ENCODE measurements at regions of chr10 and their contacts with region 1.

Region 1: GRCh38 chr10:104638861-104639589 is 2.1 kb upstream of the SORCS3 start:
- DNase-seq: peak; percentile 79

Region 2: DNA sequence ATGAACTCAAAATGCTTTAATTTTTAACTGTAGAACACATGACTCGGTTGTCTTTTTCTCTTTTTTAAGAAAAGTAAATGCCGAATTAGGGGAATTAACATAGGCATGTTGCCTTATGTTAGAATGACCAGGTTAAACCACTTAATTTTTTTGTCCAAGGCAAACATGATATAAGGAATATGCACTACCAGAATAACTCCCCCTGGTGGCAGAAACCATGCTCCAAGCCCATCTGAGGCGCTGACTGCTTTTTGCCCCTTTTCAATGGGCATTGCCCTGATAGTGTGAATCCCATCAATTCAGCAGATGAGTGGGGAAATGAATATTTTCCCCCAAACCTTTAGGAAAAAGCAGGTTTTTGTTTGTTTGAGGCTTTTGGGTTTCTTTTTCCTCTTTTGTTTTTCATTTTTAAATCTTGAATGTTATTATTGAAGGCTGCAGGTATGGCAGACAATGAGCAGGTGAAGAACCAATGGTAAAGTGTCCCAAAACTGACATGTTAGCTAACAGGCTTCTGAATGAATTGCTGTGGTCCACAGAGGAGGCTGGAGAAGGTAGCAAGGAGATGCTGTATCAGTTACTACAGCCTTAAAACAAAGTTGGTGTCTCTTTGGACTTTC is 286.3 kb after region 1 on chr10:
- CTCF ChIA-PET with region 1: interaction called, 11 read pairs
- POLR2A ChIA-PET with region 1: no interaction called
- DNase-seq: peak; percentile 39